GM10248 (cell line): ENCODE measurements at regions of chr14 and their contacts with region 1.

Region 1: DNA sequence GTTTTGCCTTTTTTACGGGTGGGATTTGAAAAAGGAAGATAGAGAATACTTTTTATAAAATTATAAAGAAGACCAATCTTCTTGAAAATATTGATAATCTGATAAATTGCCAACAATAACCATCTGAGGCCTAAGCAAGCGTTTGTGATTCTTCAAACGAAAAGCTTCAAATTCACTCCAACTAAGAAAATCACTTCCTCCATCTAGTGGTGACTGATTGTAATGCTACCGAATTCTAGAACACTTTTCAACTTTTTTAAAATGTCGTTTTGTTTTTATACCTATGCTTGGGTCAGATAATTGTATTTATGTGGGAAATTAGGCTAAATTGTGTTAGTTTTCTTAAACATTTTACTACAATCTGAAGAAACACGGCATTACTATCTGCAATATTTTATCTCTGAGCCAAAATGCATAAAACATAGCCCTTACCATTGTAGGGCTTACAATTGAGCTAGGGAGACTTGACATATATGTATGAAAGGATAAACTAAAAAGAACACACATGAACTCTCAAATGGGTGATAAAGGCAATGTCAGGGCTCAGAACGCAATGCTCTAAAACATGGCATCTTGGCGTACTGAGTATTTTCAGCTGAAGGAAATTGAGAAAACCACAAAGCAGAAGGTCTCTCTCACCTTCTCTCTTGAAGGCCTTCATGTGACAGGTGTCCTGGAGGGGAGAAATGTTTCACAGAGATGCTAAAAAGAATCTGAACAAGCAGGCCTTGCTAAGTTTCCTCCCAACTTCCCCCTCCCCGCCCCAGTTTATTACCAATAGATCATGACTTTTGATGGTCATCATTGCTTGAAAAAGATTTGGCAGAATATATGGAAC is 36.8 kb upstream of the G2E3 start:
- DNase-seq: peak; percentile 22
- CTCF ChIP-seq: peak; percentile 59

Region 2: GRCh38 chr14:30243805-30244204 is 278.3 kb before region 1 on chr14:
- CTCF ChIA-PET with region 1: no interaction called
- POLR2A ChIA-PET with region 1: no interaction called
- DNase-seq: no peak
- CTCF ChIP-seq: no peak

Region 3: GRCh38 chr14:30507209-30507608 is 14.9 kb before region 1 on chr14:
- CTCF ChIA-PET with region 1: interaction called, 10 read pairs
- POLR2A ChIA-PET with region 1: no interaction called
- DNase-seq: no peak
- CTCF ChIP-seq: no peak

Region 4: GRCh38 chr14:30532264-30532663 is 10.1 kb after region 1 on chr14:
- CTCF ChIA-PET with region 1: interaction called, 14 read pairs
- POLR2A ChIA-PET with region 1: no interaction called
- DNase-seq: no peak
- CTCF ChIP-seq: no peak